MCF 10A (cell line): ENCODE measurements at regions of chr2 and their contacts with region 1.

Region 1: DNA sequence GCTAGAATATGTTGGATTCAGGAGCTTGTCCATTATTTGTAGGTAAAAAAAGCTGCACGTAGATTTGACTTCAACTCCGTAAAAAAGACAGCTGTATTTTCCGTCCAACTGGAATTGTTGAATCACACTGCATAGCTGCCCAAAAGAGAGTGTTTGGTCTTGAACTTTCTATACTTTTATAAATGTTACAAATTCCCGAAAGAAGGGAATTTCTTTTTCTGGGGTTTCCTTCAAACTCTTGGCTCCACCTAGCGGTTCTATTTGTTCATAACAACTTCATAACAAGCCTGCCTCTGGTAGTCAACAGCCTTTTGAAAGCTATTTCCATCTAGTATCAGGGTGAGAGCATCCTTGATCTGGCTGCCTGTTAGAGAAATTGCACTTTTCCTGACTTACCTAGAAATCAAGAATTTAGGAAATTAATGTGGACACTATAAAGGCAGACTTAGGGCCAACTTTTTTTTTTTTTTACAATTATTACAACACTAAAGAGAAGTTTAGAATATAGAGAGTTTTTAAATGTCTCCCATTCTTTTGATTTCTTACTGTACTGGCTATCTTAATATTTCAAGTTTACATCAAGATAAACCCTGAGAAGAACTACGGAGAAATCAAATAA is 48.1 kb downstream of the TMEM185B start:
- DNase-seq: peak; percentile 71
- H3K4me3 Mint-ChIP-seq: no peak overlapping the region
- H3K27ac Mint-ChIP-seq: no peak overlapping the region
- H3K4me1 Mint-ChIP-seq: peaks cover 7% of the 10 kb centered on the region
- H3K27me3 Mint-ChIP-seq: no peaks in the 10 kb centered on the region
- CTCF ChIP-seq: peak; percentile 69

Region 2: GRCh38 chr2:119702918-119703401 is 472.1 kb before region 1 on chr2:
- CTCF ChIA-PET with region 1: interaction called, 27 read pairs
- POLR2A ChIA-PET with region 1: interaction called, 3 read pairs
- intact Hi-C with region 1: loop called (anchors 1 kb)
- DNase-seq: peak; percentile 75
- H3K4me3 Mint-ChIP-seq: no peak overlapping the region
- H3K27ac Mint-ChIP-seq: no peak overlapping the region
- H3K4me1 Mint-ChIP-seq: no peaks in the 10 kb centered on the region
- H3K27me3 Mint-ChIP-seq: no peaks in the 10 kb centered on the region
- CTCF ChIP-seq: peak; percentile 91

Region 3: GRCh38 chr2:119759451-119760236 is 415.4 kb before region 1 on chr2 and contains the start of gene PTPN4:
- CTCF ChIA-PET with region 1: interaction called, 15 read pairs
- POLR2A ChIA-PET with region 1: interaction called, 3 read pairs
- intact Hi-C with region 1: no loop called
- DNase-seq: peak; percentile 98
- H3K4me3 Mint-ChIP-seq: peak within 1 kb of the TSS; percentile 81
- H3K27ac Mint-ChIP-seq: peak within 1 kb of the TSS; percentile 89
- H3K4me1 Mint-ChIP-seq: peaks cover 45% of the 10 kb centered on the region
- H3K27me3 Mint-ChIP-seq: no peaks in the 10 kb centered on the region
- CTCF ChIP-seq: no peak
- total RNA-seq, gene PTPN4: 21.1 and 27.2 TPM in 2 replicates

Region 4: DNA sequence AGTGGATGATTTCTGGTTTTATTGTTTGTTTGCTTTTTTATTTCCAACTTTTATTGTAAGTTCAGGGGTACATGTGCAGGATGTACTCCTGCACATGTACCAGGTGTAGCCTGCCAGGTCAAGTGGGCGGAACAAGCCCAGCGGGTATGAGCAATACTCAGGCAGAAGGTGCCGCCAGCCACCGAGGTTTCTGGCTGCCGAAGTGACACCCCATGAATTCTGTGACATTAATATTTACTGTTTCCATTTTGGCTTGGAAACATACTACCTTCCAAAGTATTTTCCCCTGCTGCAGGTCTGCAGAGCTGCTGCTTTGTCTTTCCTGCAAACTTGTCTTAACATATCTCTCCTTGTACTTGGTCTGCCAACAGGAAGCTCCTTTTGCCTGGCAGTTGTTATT is 336.9 kb before region 1 on chr2:
- CTCF ChIA-PET with region 1: interaction called, 12 read pairs
- POLR2A ChIA-PET with region 1: no interaction called
- intact Hi-C with region 1: no loop called
- DNase-seq: peak; percentile 38
- H3K4me3 Mint-ChIP-seq: peak overlapping the region; percentile 66
- H3K27ac Mint-ChIP-seq: peak overlapping the region; percentile 90
- H3K4me1 Mint-ChIP-seq: peaks cover 26% of the 10 kb centered on the region
- H3K27me3 Mint-ChIP-seq: no peaks in the 10 kb centered on the region
- CTCF ChIP-seq: no peak

Region 5: DNA sequence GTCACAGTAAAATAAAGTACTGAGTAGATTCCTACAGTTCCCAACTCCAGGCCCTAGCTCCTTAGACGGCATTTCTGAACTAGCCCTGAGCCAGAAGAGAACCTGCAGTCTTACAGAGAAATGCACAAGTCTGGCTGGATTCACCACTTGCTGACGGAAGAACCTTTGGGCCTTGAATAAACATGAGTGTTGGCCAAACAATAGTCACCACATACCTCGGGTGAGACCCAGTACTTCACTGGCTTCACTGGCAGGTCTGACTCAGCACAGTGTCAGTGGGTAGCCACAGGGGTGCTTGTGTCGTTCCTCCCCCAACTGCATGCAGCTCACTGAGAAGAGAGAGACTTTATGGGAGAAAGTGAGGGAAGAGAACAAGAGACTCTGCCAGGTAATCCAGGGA is 40.8 kb before region 1 on chr2:
- CTCF ChIA-PET with region 1: interaction called, 25 read pairs
- POLR2A ChIA-PET with region 1: no interaction called
- intact Hi-C with region 1: no loop called
- DNase-seq: peak; percentile 96
- H3K4me3 Mint-ChIP-seq: no peak overlapping the region
- H3K27ac Mint-ChIP-seq: peak overlapping the region; percentile 70
- H3K4me1 Mint-ChIP-seq: peaks cover 28% of the 10 kb centered on the region
- H3K27me3 Mint-ChIP-seq: no peaks in the 10 kb centered on the region
- CTCF ChIP-seq: no peak

Region 6: GRCh38 chr2:120680136-120680761 is 505.2 kb after region 1 on chr2:
- CTCF ChIA-PET with region 1: interaction called, 10 read pairs
- POLR2A ChIA-PET with region 1: interaction called, 3 read pairs
- intact Hi-C with region 1: no loop called
- DNase-seq: peak; percentile 90
- H3K4me3 Mint-ChIP-seq: no peak overlapping the region
- H3K27ac Mint-ChIP-seq: no peak overlapping the region
- H3K4me1 Mint-ChIP-seq: peaks cover 10% of the 10 kb centered on the region
- H3K27me3 Mint-ChIP-seq: no peaks in the 10 kb centered on the region
- CTCF ChIP-seq: peak; percentile 65